ENCODE measurements at regions of chr12 and their contacts with region 1.

Region 1: GRCh38 chr12:8544295-8544694 is 3.6 kb upstream of the CLEC4E start:
- DNase-seq: peak; percentile 85
- H3K4me3 Mint-ChIP-seq: no peak overlapping the region
- H3K27ac Mint-ChIP-seq: no peak overlapping the region
- H3K4me1 Mint-ChIP-seq: peaks cover 10% of the 10 kb centered on the region
- H3K27me3 Mint-ChIP-seq: peaks cover 30% of the 10 kb centered on the region

Region 2: GRCh38 chr12:8527250-8528130 is 16.8 kb before region 1 on chr12:
- CTCF ChIA-PET with region 1: interaction called, 13 read pairs
- DNase-seq: no peak
- H3K4me3 Mint-ChIP-seq: no peak overlapping the region
- H3K27ac Mint-ChIP-seq: no peak overlapping the region
- H3K4me1 Mint-ChIP-seq: no peaks in the 10 kb centered on the region
- H3K27me3 Mint-ChIP-seq: peaks cover 40% of the 10 kb centered on the region

Region 3: DNA sequence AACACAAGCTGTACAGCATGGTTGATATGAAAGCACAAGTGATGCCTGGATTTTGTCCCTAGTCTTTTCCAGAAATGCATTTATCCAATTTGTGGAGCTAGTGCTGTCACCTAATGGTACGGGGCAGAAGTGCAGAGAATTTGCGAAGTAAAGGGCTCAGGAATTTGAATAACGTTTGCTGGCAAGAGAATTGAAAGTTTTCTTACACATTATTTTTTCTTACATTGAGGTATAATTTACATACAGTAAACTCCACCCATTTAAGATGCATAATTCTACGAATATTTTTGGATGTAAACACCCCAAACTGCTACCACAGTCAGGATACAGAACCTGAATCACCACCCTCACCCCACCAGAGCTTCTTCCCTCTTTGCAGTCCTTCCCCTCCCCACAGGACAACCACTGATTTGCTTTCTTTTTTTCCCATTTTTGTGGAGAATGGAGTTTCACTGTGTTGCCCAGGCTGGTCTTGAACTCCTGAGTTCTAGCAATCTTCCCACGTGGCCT is 64.8 kb after region 1 on chr12:
- CTCF ChIA-PET with region 1: interaction called, 29 read pairs
- DNase-seq: peak; percentile 26
- H3K4me3 Mint-ChIP-seq: peak overlapping the region; percentile 50
- H3K27ac Mint-ChIP-seq: no peak overlapping the region
- H3K4me1 Mint-ChIP-seq: peaks cover 11% of the 10 kb centered on the region
- H3K27me3 Mint-ChIP-seq: peaks cover 30% of the 10 kb centered on the region

Measured in activated naive CD4-positive, alpha-beta T cell treated with anti-CD3 and anti-CD28 coated beads, Interleukin-2, amount 10 ng/mL, durations not matched to agents 7 days and 5 days (primary cell).